ENCODE measurements at regions of chr1 and their contacts with region 1.

Region 1: DNA sequence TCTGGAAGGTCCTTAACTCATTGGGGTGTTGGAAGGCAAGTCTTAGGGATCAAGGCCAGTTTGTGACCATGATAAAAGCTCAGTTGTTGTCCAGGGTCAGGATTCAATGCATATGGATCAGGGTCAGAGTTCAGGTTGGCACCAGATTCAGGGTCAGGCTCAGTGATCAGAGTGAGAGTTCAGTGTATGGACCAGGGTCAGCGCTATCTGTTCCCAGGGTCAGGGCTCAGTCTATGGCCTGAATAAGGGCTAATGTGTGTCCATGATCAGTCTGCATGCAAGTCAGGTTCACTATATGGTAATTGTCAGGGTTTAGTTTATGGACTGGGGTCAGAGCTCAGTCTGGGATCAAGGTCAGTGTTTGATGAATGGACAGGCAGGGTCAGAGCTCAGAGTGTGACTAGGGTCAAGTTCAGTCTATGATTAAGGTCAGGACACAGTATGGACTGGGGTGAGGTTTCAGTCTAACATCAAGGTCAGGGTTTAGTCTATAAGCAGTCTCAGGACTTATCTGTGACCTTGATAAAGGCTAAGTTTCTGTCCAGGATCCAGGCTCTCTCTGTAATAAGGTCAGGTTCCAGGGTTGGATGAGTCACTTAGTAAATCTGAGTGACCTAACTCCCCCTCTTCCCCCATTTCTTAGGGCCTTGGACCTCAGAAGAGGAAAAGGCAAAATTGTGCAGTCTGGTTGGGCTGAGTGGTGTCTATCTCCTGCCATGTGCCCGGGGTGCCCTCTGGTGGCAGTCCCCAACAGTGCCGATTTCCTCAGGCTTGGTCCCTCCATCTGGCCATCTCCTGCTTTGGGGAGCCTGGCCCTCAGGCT is 23.8 kb downstream of the KNCN start:
- DNase-seq: peak; percentile 82 to 92 (median 88)
- H3K4me3 ChIP-seq: peak overlapping the region in 2 of 59 donors; percentile 24 to 27
- H3K27ac ChIP-seq: peak overlapping the region in 3 of 59 donors; percentile 10 to 37 (median 28)
- H3K27me3 ChIP-seq: peaks cover 0 to 8% (median 0%) of the 10 kb centered on the region in 45 donors
- CTCF ChIP-seq: peak; percentile 69 to 98 (median 93)

Region 2: DNA sequence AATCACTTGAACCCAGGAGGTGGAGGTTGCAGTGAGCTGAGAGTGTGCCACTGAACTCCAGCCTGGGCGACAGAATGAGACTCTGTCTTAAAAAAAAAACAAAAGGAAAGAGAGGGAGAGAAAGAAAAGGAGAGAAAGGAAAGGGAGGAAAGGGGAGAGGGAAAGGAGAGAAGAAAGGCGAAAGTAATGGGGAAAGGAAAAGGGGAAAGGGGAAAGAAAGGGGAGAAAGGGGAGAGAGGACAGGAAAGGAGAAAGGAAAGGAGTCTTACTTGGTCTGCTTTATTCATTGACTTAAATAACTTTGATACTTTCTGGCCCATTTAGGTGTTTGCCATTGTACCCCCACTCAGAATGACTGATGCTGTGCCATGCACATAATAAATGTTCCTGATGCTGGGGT is 175.3 kb before region 1 on chr1:
- intact Hi-C with region 1: no loop called
- DNase-seq: no peak
- H3K4me3 ChIP-seq: no peak overlapping the region
- H3K27ac ChIP-seq: no peak overlapping the region
- H3K27me3 ChIP-seq: no peaks in the 10 kb centered on the region
- CTCF ChIP-seq: no peak

Region 3: GRCh38 chr1:46401964-46402626 is 125.6 kb before region 1 on chr1:
- intact Hi-C with region 1: loop called (anchors 2 kb)
- DNase-seq: peak; percentile 68 to 94 (median 88)
- H3K4me3 ChIP-seq: peak overlapping the region in 54 of 59 donors; percentile 1 to 54 (median 32)
- H3K27ac ChIP-seq: peak overlapping the region; percentile 34 to 97 (median 90)
- H3K27me3 ChIP-seq: no peaks in the 10 kb centered on the region
- CTCF ChIP-seq: peak in 16 of 56 donors; percentile 6 to 42 (median 19)

Region 4: GRCh38 chr1:46446646-46447498 is 80.8 kb before region 1 on chr1:
- intact Hi-C with region 1: loop called (anchors 1 to 2 kb)
- DNase-seq: peak; percentile 74 to 86 (median 80)
- H3K4me3 ChIP-seq: no peak overlapping the region
- H3K27ac ChIP-seq: no peak overlapping the region
- H3K27me3 ChIP-seq: peaks cover 0 to 21% (median 9%) of the 10 kb centered on the region in 45 donors
- CTCF ChIP-seq: peak; percentile 42 to 94 (median 88)

Region 5: GRCh38 chr1:46477153-46477929 is 50.3 kb before region 1 on chr1:
- intact Hi-C with region 1: loop called (anchors 1 to 5 kb)
- DNase-seq: peak; percentile 59 to 84 (median 77)
- H3K4me3 ChIP-seq: no peak overlapping the region
- H3K27ac ChIP-seq: no peak overlapping the region
- H3K27me3 ChIP-seq: peaks cover 0 to 33% (median 0%) of the 10 kb centered on the region in 45 donors
- CTCF ChIP-seq: peak; percentile 46 to 95 (median 88)

Region 6: DNA sequence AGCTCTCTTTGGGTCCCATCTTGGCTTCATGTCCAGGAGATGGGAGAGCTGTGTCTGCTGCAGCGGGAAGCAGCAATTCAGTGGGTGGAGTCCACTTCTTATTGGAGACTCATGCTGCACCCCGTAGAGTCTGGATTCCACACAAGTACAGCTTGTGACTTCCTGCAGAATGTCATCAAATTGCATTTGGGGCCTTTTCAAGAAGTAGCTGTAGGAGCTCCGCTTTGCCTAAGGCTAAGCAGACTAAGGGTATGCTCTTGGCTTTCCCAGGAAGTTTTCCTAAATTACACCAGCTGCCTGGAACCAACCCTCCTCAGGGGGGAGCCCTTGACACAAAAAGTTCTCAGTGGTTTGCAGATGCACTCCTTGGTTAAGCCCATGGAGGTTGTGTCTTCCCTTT is 94.7 kb after region 1 on chr1:
- intact Hi-C with region 1: no loop called
- DNase-seq: peak in 1 of 10 donors; percentile 42
- H3K4me3 ChIP-seq: no peak overlapping the region
- H3K27ac ChIP-seq: peak overlapping the region in 5 of 59 donors; percentile 4 to 37 (median 25)
- H3K27me3 ChIP-seq: no peaks in the 10 kb centered on the region
- CTCF ChIP-seq: peak in 40 of 56 donors; percentile 11 to 56 (median 30)

Region 7: GRCh38 chr1:46667782-46668760 is 140.4 kb after region 1 on chr1 and contains the start of gene ATPAF1:
- intact Hi-C with region 1: loop called in 1 of 2 experiments (anchors 5 kb)
- DNase-seq: peak; percentile 58 to 83 (median 72)
- H3K4me3 ChIP-seq: peak within 1 kb of the TSS; percentile 69 to 99 (median 94)
- H3K27ac ChIP-seq: peak within 1 kb of the TSS; percentile 24 to 94 (median 88)
- H3K27me3 ChIP-seq: no peaks in the 10 kb centered on the region
- CTCF ChIP-seq: peak in 15 of 56 donors; percentile 2 to 46 (median 20)
- total RNA-seq, gene ATPAF1: 65.7 to 127 (median 93.4) TPM

Region 8: DNA sequence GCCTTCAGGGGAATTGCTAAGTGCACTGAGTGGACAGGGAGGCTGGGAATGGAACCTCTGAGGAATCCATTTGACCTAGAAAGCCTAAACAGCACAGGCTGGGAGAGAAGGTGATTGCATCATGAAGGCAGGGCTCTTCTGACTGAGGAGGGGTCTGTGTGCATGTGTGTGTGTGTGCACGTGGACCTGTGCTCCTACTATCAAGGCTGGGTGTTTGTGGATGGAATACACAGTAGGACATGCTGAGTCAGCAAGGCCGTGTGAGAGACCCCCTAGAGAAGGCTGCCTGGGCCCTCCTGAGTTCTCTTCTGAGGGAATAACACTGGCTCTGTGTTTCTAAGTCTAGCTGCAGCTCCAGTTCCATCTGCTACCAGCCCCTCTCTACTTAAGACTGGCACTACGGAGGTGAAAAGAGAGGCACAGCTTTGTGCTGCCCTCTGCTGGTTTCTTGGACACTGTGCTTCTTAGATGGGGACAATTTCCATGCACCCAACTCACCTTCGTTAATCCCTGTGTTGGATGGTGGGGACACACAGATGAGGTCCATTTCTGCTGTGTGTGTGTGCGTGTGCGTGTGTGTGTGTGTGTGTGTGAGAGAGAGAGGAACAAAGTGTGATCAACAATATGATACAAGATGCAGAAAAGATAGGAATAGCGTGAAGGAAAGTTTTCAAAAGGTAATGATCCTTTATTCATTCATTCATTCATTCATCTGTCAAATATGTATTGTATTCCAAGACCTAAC is 197.5 kb after region 1 on chr1:
- intact Hi-C with region 1: loop called (anchors 2 to 5 kb)
- DNase-seq: peak in 8 of 10 donors; percentile 52 to 80 (median 68)
- H3K4me3 ChIP-seq: peak overlapping the region in 1 of 59 donors; percentile 13
- H3K27ac ChIP-seq: no peak overlapping the region
- H3K27me3 ChIP-seq: peaks cover 0 to 14% (median 0%) of the 10 kb centered on the region in 45 donors
- CTCF ChIP-seq: peak; percentile 52 to 89 (median 78)